GM12878 (cell line): ENCODE measurements at regions of chr1 and their contacts with region 1.

Region 1: DNA sequence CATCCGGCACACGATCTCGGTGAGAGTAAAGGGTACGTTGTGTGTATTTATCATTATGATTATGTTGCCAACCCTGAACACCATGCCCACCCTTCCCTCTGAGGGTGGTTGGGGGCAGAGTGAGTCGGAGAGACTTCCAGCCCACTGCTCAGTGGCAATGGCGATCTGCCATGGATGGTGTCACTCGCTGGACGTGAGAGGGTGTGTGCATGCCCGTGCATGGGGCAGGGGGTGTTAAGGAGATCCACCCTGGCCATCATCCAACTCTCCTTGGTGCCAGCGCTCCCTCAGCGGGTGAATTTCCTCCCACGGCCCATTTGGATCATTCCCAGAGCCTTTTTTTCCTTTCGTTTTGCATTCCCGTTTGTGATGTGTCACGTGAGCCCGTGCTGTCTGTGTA is 74.1 kb upstream of the CNTN2 start:
- DNase-seq: no peak
- ATAC-seq: no peak
- H3K4me3 ChIP-seq: no peak overlapping the region
- H3K27ac ChIP-seq: no peak overlapping the region
- H3K4me1 ChIP-seq: no peaks in the 10 kb centered on the region
- H3K27me3 ChIP-seq: peaks cover 1 to 5% of the 10 kb centered on the region in 2 experiments; a peak in 2 of 4 replicates
- CTCF ChIP-seq: no peak
- EP300 ChIP-seq: no peak
- POLR2A ChIP-seq: no peak
- RAD21 ChIP-seq: no peak

Region 2: DNA sequence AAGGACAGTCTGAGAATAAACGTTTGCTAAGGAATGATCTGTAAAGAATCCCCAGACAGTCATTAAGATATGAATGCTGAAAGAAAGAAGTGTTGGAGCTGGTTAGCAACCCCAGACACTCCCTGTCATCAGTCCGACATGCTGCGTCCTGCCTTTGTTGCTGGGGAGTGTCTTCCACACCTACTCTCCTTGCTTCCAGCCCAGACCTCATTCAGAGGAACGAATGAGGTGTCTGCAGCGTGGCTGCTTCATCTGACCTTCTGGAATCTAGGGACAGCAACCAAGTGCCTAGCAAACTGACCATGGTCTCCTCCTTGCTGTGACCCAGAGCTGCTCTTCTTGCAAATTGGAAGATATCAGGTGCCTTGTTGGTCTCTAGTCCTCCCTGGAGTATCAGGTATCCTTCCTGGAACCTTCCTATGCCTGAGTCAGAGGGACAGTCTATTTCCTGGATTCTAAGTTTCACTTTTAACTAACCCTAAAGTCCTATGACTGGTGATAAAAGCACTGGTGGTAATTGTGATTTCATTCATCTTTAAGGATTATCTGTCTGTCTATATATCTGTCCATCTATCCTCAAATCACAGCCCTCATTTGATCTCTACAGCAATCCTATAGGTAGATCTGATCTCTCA is 53.0 kb before region 1 on chr1:
- CTCF ChIA-PET with region 1: no interaction called
- POLR2A ChIA-PET with region 1: no interaction called
- RAD21 ChIA-PET with region 1: no interaction called
- SMC1A ChIA-PET with region 1: no interaction called
- in situ Hi-C with region 1: loop called (anchors 5 kb)
- intact Hi-C with region 1: no loop called
- DNase-seq: no peak
- ATAC-seq: no peak
- H3K4me3 ChIP-seq: no peak overlapping the region
- H3K27ac ChIP-seq: no peak overlapping the region
- H3K4me1 ChIP-seq: no peaks in the 10 kb centered on the region
- H3K27me3 ChIP-seq: no peaks in the 10 kb centered on the region
- CTCF ChIP-seq: no peak
- EP300 ChIP-seq: no peak
- POLR2A ChIP-seq: no peak
- RAD21 ChIP-seq: no peak

Region 3: GRCh38 chr1:204950353-204951001 is 18.5 kb before region 1 on chr1:
- CTCF ChIA-PET with region 1: no interaction called
- POLR2A ChIA-PET with region 1: no interaction called
- RAD21 ChIA-PET with region 1: no interaction called
- SMC1A ChIA-PET with region 1: no interaction called
- in situ Hi-C with region 1: no loop called
- intact Hi-C with region 1: no loop called
- DNase-seq: no peak
- ATAC-seq: no peak
- H3K4me3 ChIP-seq: no peak overlapping the region
- H3K27ac ChIP-seq: no peak overlapping the region
- H3K4me1 ChIP-seq: no peaks in the 10 kb centered on the region
- H3K27me3 ChIP-seq: peaks cover 0 to 2% of the 10 kb centered on the region in 2 experiments; a peak in 2 of 4 replicates
- CTCF ChIP-seq: no peak
- EP300 ChIP-seq: no peak
- POLR2A ChIP-seq: no peak
- RAD21 ChIP-seq: no peak